ENCODE measurements at regions of chr19 and their contacts with region 1.

Region 1: GRCh38 chr19:35767288-35768081 is 7.9 kb upstream of the ARHGAP33 start:
- DNase-seq: no peak
- H3K4me3 ChIP-seq: no peak overlapping the region
- H3K27ac ChIP-seq: no peak overlapping the region
- H3K4me1 ChIP-seq: no peaks in the 10 kb centered on the region
- H3K27me3 ChIP-seq: no peaks in the 10 kb centered on the region
- CTCF ChIP-seq: no peak

Region 2: GRCh38 chr19:34943861-34944573 is 823.5 kb before region 1 on chr19:
- CTCF ChIA-PET with region 1: no interaction called
- POLR2A ChIA-PET with region 1: no interaction called
- intact Hi-C with region 1: no loop called
- DNase-seq: no peak
- H3K4me3 ChIP-seq: no peak overlapping the region
- H3K27ac ChIP-seq: no peak overlapping the region
- H3K4me1 ChIP-seq: no peaks in the 10 kb centered on the region
- H3K27me3 ChIP-seq: no peaks in the 10 kb centered on the region
- CTCF ChIP-seq: no peak

Region 3: DNA sequence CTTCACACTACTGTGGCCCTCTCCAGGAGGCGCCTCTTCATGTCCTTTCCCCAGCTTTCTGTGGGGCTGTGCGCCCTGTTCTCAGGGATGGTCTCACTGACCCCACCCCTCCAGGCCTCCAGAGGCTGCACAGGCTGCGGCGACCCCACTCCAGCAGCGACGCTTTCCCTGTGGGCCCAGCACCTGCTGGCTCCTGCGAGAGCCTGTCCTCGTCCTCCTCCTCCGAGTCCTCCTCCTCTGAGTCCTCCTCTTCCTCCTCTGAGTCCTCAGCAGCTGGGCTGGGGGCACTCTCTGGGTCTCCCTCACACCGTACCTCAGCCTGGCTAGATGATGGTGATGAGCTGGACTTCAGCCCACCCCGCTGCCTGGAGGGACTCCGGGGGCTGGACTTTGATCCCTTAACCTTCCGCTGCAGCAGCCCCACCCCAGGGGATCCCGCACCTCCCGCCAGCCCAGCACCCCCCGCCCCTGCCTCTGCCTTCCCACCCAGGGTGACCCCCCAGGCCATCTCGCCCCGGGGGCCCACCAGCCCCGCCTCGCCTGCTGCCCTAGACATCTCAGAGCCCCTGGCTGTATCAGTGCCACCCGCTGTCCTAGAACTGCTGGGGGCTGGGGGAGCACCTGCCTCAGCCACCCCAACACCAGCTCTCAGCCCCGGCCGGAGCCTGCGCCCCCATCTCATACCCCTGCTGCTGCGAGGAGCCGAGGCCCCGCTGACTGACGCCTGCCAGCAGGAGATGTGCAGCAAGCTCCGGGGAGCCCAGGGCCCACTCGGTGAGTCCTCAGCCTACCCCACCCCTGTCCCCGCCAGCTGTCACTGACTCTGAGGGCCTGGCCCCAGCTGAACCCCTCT is 19.0 kb after region 1 on chr19:
- CTCF ChIA-PET with region 1: no interaction called
- POLR2A ChIA-PET with region 1: interaction called, 11 read pairs
- intact Hi-C with region 1: no loop called
- DNase-seq: no peak
- H3K4me3 ChIP-seq: no peak overlapping the region
- H3K27ac ChIP-seq: no peak overlapping the region
- H3K4me1 ChIP-seq: no peaks in the 10 kb centered on the region
- H3K27me3 ChIP-seq: no peaks in the 10 kb centered on the region
- CTCF ChIP-seq: no peak